ENCODE measurements at regions of chr19 and their contacts with region 1.

Region 1: GRCh38 chr19:30406220-30407067 is 34.3 kb downstream of the ZNF536 start:
- DNase-seq: peak in 2 of 5 donors; percentile 38 to 39
- ATAC-seq: peak; percentile 86 to 96 (median 92)
- H3K4me3 ChIP-seq: no peak overlapping the region
- H3K27ac ChIP-seq: no peak overlapping the region
- H3K4me1 ChIP-seq: peaks cover 0 to 7% (median 0%) of the 10 kb centered on the region in 12 donors
- H3K27me3 ChIP-seq: no peaks in the 10 kb centered on the region
- CTCF ChIP-seq: peak; percentile 12 to 59 (median 44)
- POLR2A ChIP-seq: no peak

Region 2: DNA sequence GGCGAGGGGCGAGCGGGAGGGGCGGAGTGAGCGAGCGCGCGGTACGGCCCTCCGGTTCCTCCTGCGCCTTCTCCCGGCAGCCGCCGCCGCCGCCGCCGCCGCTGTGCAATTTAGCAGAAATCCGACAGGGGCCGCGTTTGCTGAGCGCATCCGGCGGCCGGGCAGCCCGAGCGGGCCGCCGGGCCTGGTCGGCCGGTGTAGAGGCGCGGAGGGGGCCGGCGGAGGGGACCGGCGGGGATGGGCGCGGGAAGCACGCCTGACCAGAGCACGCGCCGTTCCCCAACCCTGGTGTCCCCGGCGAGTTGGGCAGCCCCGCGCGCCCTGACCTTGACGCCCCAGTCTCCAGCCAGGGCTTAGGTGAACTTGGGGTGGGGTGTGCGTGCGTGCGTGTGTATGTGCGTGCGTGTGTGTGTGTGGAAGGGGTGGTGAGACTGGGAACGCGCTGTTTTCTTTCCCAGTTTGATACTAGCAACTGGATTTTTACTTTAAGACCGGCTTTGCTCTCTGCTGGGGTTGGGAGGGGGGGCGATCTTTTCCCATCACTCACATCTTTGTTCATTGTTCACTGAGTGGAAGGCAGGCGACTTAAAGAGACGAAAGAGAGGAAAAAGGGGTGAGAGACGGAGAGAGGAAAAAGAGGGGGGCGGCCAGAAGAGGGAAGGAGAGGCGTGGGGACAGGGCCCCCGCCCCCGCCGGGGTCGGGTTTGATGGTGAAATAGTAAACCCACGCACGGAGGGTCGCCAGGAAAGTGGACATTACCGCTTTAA is 178.6 kb before region 1 on chr19:
- intact Hi-C with region 1: loop called in 6 of 10 experiments (anchors 1 to 10 kb)
- DNase-seq: peak; percentile 56 to 85 (median 68)
- ATAC-seq: peak; percentile 64 to 86 (median 78)
- H3K4me3 ChIP-seq: peak overlapping the region; percentile 41 to 69 (median 56)
- H3K27ac ChIP-seq: peak overlapping the region in 7 of 12 donors; percentile 15 to 82 (median 39)
- H3K4me1 ChIP-seq: peaks cover 0 to 51% (median 15%) of the 10 kb centered on the region in 12 donors
- H3K27me3 ChIP-seq: peaks cover 4 to 81% (median 49%) of the 10 kb centered on the region in 9 donors
- CTCF ChIP-seq: peak; percentile 27 to 77 (median 64)
- POLR2A ChIP-seq: no peak

Region 3: GRCh38 chr19:30245401-30246039 is 160.9 kb before region 1 on chr19:
- intact Hi-C with region 1: loop called in 1 of 10 experiments (anchors 10 kb)
- DNase-seq: no peak
- ATAC-seq: no peak
- H3K4me3 ChIP-seq: no peak overlapping the region
- H3K27ac ChIP-seq: no peak overlapping the region
- H3K4me1 ChIP-seq: peaks cover 0 to 5% (median 0%) of the 10 kb centered on the region in 12 donors
- H3K27me3 ChIP-seq: peaks cover 0 to 18% (median 0%) of the 10 kb centered on the region in 9 donors
- CTCF ChIP-seq: no peak
- POLR2A ChIP-seq: no peak